HCT116 (cell line): ENCODE measurements at regions of chr14 and their contacts with region 1.

Region 1: GRCh38 chr14:36373982-36374673 is 53.7 kb upstream of the MBIP start:
- DNase-seq: peak; percentile 82
- ATAC-seq: peak; percentile 100
- H3K4me3 ChIP-seq: no peak overlapping the region
- H3K27ac ChIP-seq: no peak overlapping the region
- H3K4me1 ChIP-seq: no peaks in the 10 kb centered on the region
- H3K27me3 ChIP-seq: no peaks in the 10 kb centered on the region
- CTCF ChIP-seq: peak; percentile 73 to 93 (median 90)
- POLR2A ChIP-seq: no peak
- RAD21 ChIP-seq: peak; percentile 76

Region 2: GRCh38 chr14:36105401-36105800 is 268.7 kb before region 1 on chr14:
- CTCF ChIA-PET with region 1: interaction called, 16 read pairs
- POLR2A ChIA-PET with region 1: interaction called, 3 read pairs
- RAD21 ChIA-PET with region 1: no interaction called
- intact Hi-C with region 1: loop called (anchors 1 kb)
- DNase-seq: peak; percentile 40
- ATAC-seq: peak; percentile 87
- H3K4me3 ChIP-seq: no peak overlapping the region
- H3K27ac ChIP-seq: no peak overlapping the region
- H3K4me1 ChIP-seq: no peaks in the 10 kb centered on the region
- H3K27me3 ChIP-seq: peaks cover 4% of the 10 kb centered on the region; the same call in 1 of the 2 replicates
- CTCF ChIP-seq: peak; percentile 43 to 60 (median 46); a peak in 4 of 6 replicates
- POLR2A ChIP-seq: no peak
- RAD21 ChIP-seq: peak; percentile 72

Region 3: DNA sequence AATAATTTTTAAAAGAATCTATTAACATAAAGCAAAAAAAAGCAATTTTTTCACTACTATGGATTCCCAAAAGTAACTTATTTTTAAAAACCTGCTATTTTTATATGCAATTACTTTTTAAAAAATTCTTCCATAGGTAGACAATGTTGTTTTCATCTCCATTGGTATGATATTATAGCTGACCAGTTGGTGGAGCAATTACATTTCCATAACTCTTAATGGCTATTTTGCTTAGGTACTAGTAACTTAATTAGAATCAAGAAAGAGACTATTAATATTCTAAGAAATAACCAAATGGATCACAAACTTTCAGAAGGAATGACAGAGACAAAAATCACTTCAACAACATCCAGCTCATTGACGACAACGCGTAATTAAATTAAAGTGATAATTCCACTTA is 132.9 kb before region 1 on chr14:
- CTCF ChIA-PET with region 1: interaction called, 10 read pairs
- POLR2A ChIA-PET with region 1: no interaction called
- RAD21 ChIA-PET with region 1: no interaction called
- intact Hi-C with region 1: no loop called
- DNase-seq: no peak
- ATAC-seq: no peak
- H3K4me3 ChIP-seq: no peak overlapping the region
- H3K27ac ChIP-seq: no peak overlapping the region
- H3K4me1 ChIP-seq: no peaks in the 10 kb centered on the region
- H3K27me3 ChIP-seq: no peaks in the 10 kb centered on the region
- CTCF ChIP-seq: peak; percentile 17 to 46 (median 35); a peak in 4 of 6 replicates
- POLR2A ChIP-seq: no peak
- RAD21 ChIP-seq: peak; percentile 44

Region 4: DNA sequence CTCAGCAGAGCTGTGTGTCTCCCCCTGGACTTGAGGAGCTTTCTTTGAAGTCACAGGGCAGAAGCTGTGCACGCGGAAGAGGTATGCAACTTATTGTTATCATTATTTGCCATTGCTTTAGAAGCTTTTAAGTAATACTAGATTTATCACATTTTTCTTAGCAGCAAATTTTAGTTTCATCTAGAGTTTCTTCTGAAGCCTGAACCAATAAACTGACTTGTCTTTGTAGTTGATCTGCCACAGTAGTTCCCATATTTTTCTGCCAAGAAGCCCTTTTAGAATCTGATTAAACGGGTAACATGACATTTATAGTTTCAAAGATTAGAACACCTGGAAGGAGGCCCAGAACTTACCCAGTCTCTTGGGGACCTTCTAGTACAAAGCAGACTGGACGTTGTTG is 260.1 kb after region 1 on chr14:
- CTCF ChIA-PET with region 1: no interaction called
- POLR2A ChIA-PET with region 1: no interaction called
- RAD21 ChIA-PET with region 1: no interaction called
- intact Hi-C with region 1: no loop called
- DNase-seq: no peak
- ATAC-seq: no peak
- H3K4me3 ChIP-seq: no peak overlapping the region
- H3K27ac ChIP-seq: no peak overlapping the region
- H3K4me1 ChIP-seq: no peaks in the 10 kb centered on the region
- H3K27me3 ChIP-seq: no peaks in the 10 kb centered on the region
- CTCF ChIP-seq: no peak
- POLR2A ChIP-seq: no peak
- RAD21 ChIP-seq: no peak